ENCODE measurements at regions of chr5 and their contacts with region 1.

Region 1: GRCh38 chr5:45038366-45038987 is 229.7 kb downstream of the MRPS30 start:
- DNase-seq: no peak
- ATAC-seq: no peak
- H3K4me3 ChIP-seq: no peak overlapping the region
- H3K27ac ChIP-seq: no peak overlapping the region
- H3K4me1 ChIP-seq: no peaks in the 10 kb centered on the region
- H3K27me3 ChIP-seq: no peaks in the 10 kb centered on the region

Region 2: DNA sequence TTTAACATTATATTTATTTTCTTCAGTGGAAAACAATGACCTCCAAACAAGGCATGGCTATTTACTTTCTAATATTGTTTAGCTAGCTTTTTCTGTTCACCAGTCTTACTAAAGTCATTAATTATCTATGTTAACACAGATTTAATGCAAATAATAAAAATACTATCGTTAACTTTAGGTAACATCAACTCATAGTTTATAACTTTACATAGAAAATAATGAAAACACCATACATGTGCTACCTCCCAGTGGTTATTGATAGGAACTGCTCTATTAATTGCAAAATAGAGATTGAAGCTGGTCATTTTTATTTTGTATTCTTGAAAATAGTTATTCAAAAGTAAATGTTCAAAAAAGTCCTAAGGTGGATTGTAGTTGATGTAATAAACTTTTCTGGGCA is 736.1 kb after region 1 on chr5:
- intact Hi-C with region 1: loop called in 1 of 4 experiments (anchors 10 kb)
- DNase-seq: no peak
- ATAC-seq: no peak
- H3K4me3 ChIP-seq: no peak overlapping the region
- H3K27ac ChIP-seq: no peak overlapping the region
- H3K4me1 ChIP-seq: no peaks in the 10 kb centered on the region
- H3K27me3 ChIP-seq: no peaks in the 10 kb centered on the region